Caco-2 (cell line): ENCODE measurements at regions of chr2 and their contacts with region 1.

Region 1: DNA sequence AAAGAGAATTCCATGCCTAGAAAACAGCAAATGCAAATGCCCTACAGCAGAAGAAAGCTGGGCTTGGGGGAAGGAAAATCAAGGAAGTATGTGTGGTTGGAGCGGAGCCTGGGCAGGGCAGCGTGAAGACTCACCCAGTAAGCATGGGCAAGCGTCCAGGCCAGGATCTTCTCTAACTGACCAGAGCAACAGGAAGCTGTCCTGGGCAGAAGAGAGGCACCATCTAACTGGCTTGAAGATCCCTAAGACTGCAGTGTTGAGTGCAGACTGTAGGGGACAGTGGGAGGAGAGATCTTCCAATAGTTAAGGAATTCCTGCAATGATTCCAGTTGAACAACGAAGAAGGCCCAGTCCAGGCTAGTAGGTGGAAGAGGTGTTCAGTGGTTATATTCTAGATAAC is 57.9 kb downstream of the NXPH2 start:
- DNase-seq: no peak
- H3K4me3 ChIP-seq: no peak overlapping the region
- H3K4me3 Mint-ChIP-seq: no peak overlapping the region
- H3K27ac Mint-ChIP-seq: no peak overlapping the region
- H3K4me1 ChIP-seq: peaks cover 36% of the 10 kb centered on the region
- H3K4me1 Mint-ChIP-seq: peaks cover 41% of the 10 kb centered on the region
- H3K27me3 ChIP-seq: no peaks in the 10 kb centered on the region
- H3K27me3 Mint-ChIP-seq: no peaks in the 10 kb centered on the region
- CTCF ChIP-seq: no peak

Region 2: DNA sequence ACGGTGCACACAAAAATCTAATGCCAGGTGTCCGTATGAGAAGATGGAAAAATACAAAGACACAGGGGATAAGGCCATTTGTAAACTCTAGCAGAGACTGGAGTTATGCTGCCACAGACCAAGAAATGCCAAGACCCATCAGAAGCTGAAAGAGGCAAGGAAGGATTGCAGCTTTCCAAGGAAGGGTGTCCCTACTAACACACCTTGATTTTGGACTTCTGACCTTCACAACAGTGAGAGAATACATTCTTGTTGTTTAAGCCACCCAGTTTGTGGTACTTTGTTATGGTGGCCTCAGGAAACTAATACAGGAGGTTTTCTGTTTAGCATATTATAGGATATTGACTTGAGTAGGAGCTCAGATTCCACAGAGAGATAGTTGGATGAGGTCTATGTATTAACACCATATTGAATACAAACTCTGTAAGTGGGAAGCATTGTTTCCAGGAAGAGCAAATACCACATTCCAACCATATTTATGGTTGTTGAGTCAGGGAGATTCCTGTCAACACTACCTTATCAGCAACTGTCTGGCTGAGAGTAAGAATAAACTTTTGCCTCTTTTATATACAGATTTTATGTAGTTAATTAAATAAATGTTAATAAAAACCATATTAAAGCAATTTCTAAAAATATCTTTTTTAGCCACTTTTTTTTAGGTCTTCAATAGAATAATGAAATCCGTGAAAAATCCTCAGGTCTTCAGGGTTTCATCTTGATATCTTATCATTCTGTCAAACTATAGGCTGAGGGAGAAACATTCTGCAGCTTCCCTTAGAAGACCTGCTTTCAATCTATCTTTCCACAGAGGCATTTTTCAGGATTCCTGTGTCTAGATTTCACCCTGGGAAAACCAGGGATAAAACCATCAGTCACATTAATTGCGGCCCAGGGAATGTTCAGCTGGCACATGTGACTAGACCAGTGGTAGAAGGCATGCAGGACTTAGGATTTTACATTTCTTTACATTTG is 793.5 kb before region 1 on chr2:
- CTCF ChIA-PET with region 1: no interaction called
- POLR2A ChIA-PET with region 1: no interaction called
- intact Hi-C with region 1: loop called (anchors 10 kb)
- DNase-seq: peak; percentile 49 to 71
- H3K4me3 ChIP-seq: no peak overlapping the region
- H3K4me3 Mint-ChIP-seq: peak overlapping the region; percentile 37
- H3K27ac Mint-ChIP-seq: peak overlapping the region; percentile 91
- H3K4me1 ChIP-seq: peaks cover 21% of the 10 kb centered on the region
- H3K4me1 Mint-ChIP-seq: peaks cover 20% of the 10 kb centered on the region
- H3K27me3 ChIP-seq: no peaks in the 10 kb centered on the region
- H3K27me3 Mint-ChIP-seq: no peaks in the 10 kb centered on the region
- CTCF ChIP-seq: no peak

Region 3: DNA sequence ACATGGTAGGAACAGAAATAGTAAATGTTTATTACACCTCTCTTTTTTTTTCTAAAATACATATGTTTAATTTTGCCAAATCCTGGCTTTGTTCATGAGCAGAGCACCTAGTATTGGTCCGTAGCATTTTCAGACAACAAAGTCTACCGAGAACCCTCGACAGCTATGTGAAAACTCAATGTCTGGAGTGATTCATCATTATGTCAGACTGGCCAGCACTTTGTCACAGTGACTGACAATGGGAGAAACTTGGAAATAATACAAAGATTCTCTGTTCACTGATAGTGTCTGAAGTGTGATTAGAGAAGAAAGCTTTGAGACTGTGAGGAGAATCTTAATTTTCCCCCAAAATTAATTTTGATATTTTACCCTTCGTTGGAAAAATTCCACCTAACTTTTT is 615.0 kb before region 1 on chr2:
- CTCF ChIA-PET with region 1: no interaction called
- POLR2A ChIA-PET with region 1: no interaction called
- intact Hi-C with region 1: loop called (anchors 10 kb)
- DNase-seq: no peak
- H3K4me3 ChIP-seq: no peak overlapping the region
- H3K4me3 Mint-ChIP-seq: no peak overlapping the region
- H3K27ac Mint-ChIP-seq: no peak overlapping the region
- H3K4me1 ChIP-seq: peaks cover 68% of the 10 kb centered on the region
- H3K4me1 Mint-ChIP-seq: peaks cover 42% of the 10 kb centered on the region
- H3K27me3 ChIP-seq: no peaks in the 10 kb centered on the region
- H3K27me3 Mint-ChIP-seq: no peaks in the 10 kb centered on the region
- CTCF ChIP-seq: no peak

Region 4: GRCh38 chr2:138244501-138244925 is 477.8 kb before region 1 on chr2:
- CTCF ChIA-PET with region 1: no interaction called
- POLR2A ChIA-PET with region 1: no interaction called
- intact Hi-C with region 1: no loop called
- DNase-seq: no peak
- H3K4me3 ChIP-seq: no peak overlapping the region
- H3K4me3 Mint-ChIP-seq: no peak overlapping the region
- H3K27ac Mint-ChIP-seq: no peak overlapping the region
- H3K4me1 ChIP-seq: peaks cover 10% of the 10 kb centered on the region; the same call in 1 of the 2 replicates
- H3K4me1 Mint-ChIP-seq: no peaks in the 10 kb centered on the region
- H3K27me3 ChIP-seq: no peaks in the 10 kb centered on the region
- H3K27me3 Mint-ChIP-seq: no peaks in the 10 kb centered on the region
- CTCF ChIP-seq: no peak

Region 5: DNA sequence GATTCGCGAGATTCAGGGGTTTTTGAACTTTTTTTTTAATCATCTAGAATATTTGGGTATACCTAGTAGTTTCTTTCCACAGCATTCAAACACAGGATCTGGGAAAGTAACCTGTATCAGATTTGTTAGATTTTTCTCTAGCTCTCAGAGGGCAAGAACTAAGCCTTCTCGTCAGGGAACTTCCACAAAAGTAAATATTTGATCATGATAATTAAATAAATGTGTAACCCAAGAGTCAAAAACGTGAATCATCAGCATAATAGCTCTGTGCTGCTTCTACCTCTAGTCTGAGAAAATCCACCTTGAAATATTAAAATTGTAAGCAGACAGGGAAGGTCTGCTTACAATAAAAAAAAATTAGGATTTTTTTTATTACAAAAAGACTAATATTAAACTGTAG is 446.4 kb before region 1 on chr2:
- CTCF ChIA-PET with region 1: no interaction called
- POLR2A ChIA-PET with region 1: no interaction called
- intact Hi-C with region 1: loop called (anchors 10 kb)
- DNase-seq: no peak
- H3K4me3 ChIP-seq: no peak overlapping the region
- H3K4me3 Mint-ChIP-seq: peak overlapping the region; percentile 46
- H3K27ac Mint-ChIP-seq: peak overlapping the region; percentile 86
- H3K4me1 ChIP-seq: peaks cover 49% of the 10 kb centered on the region
- H3K4me1 Mint-ChIP-seq: peaks cover 29% of the 10 kb centered on the region
- H3K27me3 ChIP-seq: no peaks in the 10 kb centered on the region
- H3K27me3 Mint-ChIP-seq: no peaks in the 10 kb centered on the region
- CTCF ChIP-seq: no peak

Region 6: DNA sequence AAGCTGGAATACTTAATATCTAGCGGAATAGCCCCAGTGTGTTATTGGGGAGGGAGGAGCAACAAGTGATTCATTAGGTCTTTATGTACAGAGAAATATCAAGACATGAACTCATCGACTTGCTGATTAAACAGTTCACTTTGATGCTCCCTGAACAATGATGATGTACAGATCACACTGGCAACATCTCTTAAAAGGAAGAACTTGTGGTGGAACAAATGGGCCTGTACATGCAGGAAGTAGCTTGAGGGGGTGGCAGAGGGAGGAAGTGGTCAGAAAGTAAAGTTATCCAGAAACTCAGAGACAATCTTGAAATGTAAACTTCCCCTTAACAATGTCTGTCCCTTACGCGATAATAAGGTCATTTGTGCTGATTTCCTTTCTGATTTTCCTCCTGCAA is 32.6 kb before region 1 on chr2:
- CTCF ChIA-PET with region 1: no interaction called
- POLR2A ChIA-PET with region 1: no interaction called
- intact Hi-C with region 1: loop called (anchors 2 kb)
- DNase-seq: no peak
- H3K4me3 ChIP-seq: no peak overlapping the region
- H3K4me3 Mint-ChIP-seq: no peak overlapping the region
- H3K27ac Mint-ChIP-seq: no peak overlapping the region
- H3K4me1 ChIP-seq: peaks cover 5% of the 10 kb centered on the region; the same call in 1 of the 2 replicates
- H3K4me1 Mint-ChIP-seq: no peaks in the 10 kb centered on the region
- H3K27me3 ChIP-seq: no peaks in the 10 kb centered on the region
- H3K27me3 Mint-ChIP-seq: no peaks in the 10 kb centered on the region
- CTCF ChIP-seq: no peak

Region 7: DNA sequence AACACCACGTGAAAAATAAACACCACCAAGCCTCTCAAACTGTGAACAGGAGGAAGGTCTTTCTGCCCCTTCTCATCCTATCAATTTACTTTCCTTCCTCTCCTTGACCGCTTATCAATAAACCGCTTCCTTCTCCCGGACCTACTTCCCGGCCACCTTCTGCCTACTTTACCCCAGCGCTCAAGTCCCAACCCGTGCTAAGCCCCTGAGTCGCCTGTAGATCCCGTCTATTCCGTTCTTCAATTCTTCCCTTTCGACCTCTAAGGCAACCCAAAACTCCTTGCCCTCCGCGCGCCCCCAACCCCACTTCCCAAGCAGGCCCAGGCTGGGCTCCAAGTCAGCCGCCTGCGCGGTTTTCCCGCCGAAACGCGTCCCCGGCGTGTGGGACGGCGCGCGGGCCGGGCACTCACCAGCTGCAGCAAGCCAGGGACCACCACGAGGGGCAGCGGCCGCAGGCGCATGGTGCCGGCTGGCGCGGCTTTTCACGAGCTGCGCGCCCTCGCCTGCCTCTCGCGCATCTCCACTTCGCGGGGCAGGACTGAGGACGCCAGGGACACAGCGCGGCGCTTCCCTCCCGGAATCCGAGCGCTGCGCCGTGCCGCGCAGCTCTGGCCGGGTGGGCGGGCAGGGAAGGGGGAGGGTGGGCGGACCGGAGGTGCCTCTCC is 57.6 kb after region 1 on chr2 and contains the start of gene NXPH2:
- CTCF ChIA-PET with region 1: no interaction called
- POLR2A ChIA-PET with region 1: no interaction called
- intact Hi-C with region 1: loop called (anchors 1 kb)
- DNase-seq: no peak
- H3K4me3 ChIP-seq: no peak within 1 kb of the TSS
- H3K4me3 Mint-ChIP-seq: no peak within 1 kb of the TSS
- H3K27ac Mint-ChIP-seq: peak within 1 kb of the TSS; percentile 88
- H3K4me1 ChIP-seq: peaks cover 15% of the 10 kb centered on the region
- H3K4me1 Mint-ChIP-seq: peaks cover 15% of the 10 kb centered on the region
- H3K27me3 ChIP-seq: no peaks in the 10 kb centered on the region
- H3K27me3 Mint-ChIP-seq: no peaks in the 10 kb centered on the region
- CTCF ChIP-seq: no peak
- total RNA-seq, gene NXPH2: not detected in 2 replicates

Region 8: GRCh38 chr2:138867341-138867740 is 145.0 kb after region 1 on chr2:
- CTCF ChIA-PET with region 1: no interaction called
- POLR2A ChIA-PET with region 1: no interaction called
- intact Hi-C with region 1: no loop called
- DNase-seq: no peak
- H3K4me3 ChIP-seq: no peak overlapping the region
- H3K4me3 Mint-ChIP-seq: no peak overlapping the region
- H3K27ac Mint-ChIP-seq: no peak overlapping the region
- H3K4me1 ChIP-seq: no peaks in the 10 kb centered on the region
- H3K4me1 Mint-ChIP-seq: no peaks in the 10 kb centered on the region
- H3K27me3 ChIP-seq: no peaks in the 10 kb centered on the region
- H3K27me3 Mint-ChIP-seq: peaks cover 3% of the 10 kb centered on the region
- CTCF ChIP-seq: no peak